ENCODE measurements at regions of chr13 and their contacts with region 1.

Region 1: GRCh38 chr13:110661256-110661655 is 44.7 kb downstream of the CARS2 start:
- DNase-seq: no peak
- ATAC-seq: no peak
- H3K4me3 ChIP-seq: no peak overlapping the region
- H3K27ac ChIP-seq: no peak overlapping the region
- H3K4me1 ChIP-seq: no peaks in the 10 kb centered on the region
- H3K27me3 ChIP-seq: no peaks in the 10 kb centered on the region
- CTCF ChIP-seq: no peak

Region 2: DNA sequence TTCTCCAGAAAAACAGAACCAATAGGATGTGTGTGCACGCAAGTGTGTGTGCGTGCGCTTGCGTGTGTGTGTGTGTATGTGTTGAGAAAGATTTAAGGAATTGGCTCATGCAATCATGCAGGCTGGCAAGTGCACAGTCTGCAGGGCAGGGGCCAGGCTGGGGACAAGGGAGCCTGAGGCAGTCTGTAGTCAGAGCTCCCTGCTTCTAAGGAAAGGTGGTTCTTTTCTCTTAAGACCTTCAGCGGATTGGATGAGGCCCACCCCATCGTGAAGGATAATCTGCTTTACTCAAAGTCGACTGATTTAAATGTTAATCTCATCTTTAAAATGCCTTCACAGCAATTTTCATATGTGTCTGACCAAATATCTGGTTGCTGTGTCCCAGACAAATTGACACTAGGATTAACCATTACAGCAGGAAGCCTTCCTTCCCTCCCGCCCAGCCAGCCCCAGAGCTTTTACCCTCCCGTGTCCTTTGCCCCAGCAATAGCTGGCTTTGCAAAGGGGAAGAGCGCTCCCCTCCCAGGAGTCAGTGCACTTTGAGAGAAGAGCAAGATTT is 60.9 kb before region 1 on chr13:
- CTCF ChIA-PET with region 1: no interaction called
- POLR2A ChIA-PET with region 1: no interaction called
- intact Hi-C with region 1: no loop called
- DNase-seq: no peak
- ATAC-seq: no peak
- H3K4me3 ChIP-seq: no peak overlapping the region
- H3K27ac ChIP-seq: no peak overlapping the region
- H3K4me1 ChIP-seq: no peaks in the 10 kb centered on the region
- H3K27me3 ChIP-seq: no peaks in the 10 kb centered on the region
- CTCF ChIP-seq: no peak

Region 3: GRCh38 chr13:110698689-110699088 is 37.4 kb after region 1 on chr13:
- CTCF ChIA-PET with region 1: no interaction called
- POLR2A ChIA-PET with region 1: no interaction called
- intact Hi-C with region 1: no loop called
- DNase-seq: no peak
- ATAC-seq: no peak
- H3K4me3 ChIP-seq: no peak overlapping the region
- H3K27ac ChIP-seq: no peak overlapping the region
- H3K4me1 ChIP-seq: 0 out of 2 replicates have a peak, but pooled peaks cover 3% of the 10 kb centered on the region
- H3K27me3 ChIP-seq: no peaks in the 10 kb centered on the region
- CTCF ChIP-seq: no peak

Region 4: GRCh38 chr13:110737555-110737954 is 76.3 kb after region 1 on chr13:
- CTCF ChIA-PET with region 1: no interaction called
- POLR2A ChIA-PET with region 1: interaction called, 10 read pairs
- intact Hi-C with region 1: no loop called
- DNase-seq: no peak
- ATAC-seq: no peak
- H3K4me3 ChIP-seq: no peak overlapping the region
- H3K27ac ChIP-seq: no peak overlapping the region
- H3K4me1 ChIP-seq: no peaks in the 10 kb centered on the region
- H3K27me3 ChIP-seq: no peaks in the 10 kb centered on the region
- CTCF ChIP-seq: no peak

Measured in PC-3 (cell line).